Psoas muscle (tissue), 8 donors: ENCODE measurements at regions of chr2 and their contacts with region 1.

Region 1: GRCh38 chr2:64914735-64915509 is 74.3 kb upstream of the SLC1A4 start:
- DNase-seq: no peak
- ATAC-seq: no peak
- H3K4me3 ChIP-seq: no peak overlapping the region
- H3K27ac ChIP-seq: no peak overlapping the region
- H3K4me1 ChIP-seq: peaks cover 9% of the 10 kb centered on the region
- H3K27me3 ChIP-seq: no peaks in the 10 kb centered on the region
- CTCF ChIP-seq: no peak

Region 2: GRCh38 chr2:64988420-64989125 is 73.7 kb after region 1 on chr2:
- intact Hi-C with region 1: loop called (anchors 5 kb)
- DNase-seq: peak; percentile 72 to 78
- ATAC-seq: peak; percentile 69 to 79 (median 73)
- H3K4me3 ChIP-seq: peak overlapping the region; percentile 98
- H3K27ac ChIP-seq: peak overlapping the region; percentile 100
- H3K4me1 ChIP-seq: peaks cover 24% of the 10 kb centered on the region
- H3K27me3 ChIP-seq: no peaks in the 10 kb centered on the region
- CTCF ChIP-seq: peak; percentile 44

Region 3: DNA sequence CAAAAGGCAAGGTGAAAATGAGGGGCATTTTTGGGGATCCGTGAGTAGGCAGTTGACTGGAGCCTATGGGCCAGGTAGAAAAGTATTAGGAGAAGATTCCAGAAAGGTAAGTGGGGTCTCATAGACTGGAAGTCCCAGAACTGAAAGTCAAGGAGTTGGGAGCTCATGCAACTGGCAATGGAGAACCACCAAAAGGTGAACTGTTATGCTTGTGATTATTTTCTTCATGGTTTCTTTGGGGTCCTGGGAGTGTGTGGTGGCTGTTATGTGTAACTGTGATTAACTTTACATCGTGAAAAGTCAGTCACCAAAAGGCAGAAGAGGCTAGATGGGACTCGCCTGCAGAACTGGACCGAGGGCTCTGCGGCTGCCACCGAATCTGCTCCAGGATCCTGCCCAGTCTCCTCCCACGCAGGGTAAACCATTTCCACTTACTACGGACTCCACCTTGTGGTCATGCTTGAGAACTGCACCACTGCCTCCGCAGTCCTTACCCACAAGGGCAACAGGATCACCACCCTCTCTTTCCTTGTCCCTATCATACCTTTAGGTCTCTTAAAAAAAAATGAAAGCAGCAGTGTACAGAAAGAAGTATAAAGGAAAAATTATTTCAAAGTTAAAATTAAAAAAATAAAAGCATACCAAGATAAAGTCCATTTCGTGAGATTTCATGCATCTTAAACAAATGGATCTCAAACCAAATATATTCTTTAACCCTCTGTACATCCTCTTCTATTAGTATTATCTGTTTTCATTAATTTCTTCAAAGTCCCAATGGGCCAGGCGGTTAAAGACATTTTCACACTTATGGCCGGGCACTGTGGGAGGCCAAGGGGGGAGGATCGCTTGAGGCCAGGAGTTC is 125.7 kb after region 1 on chr2:
- intact Hi-C with region 1: loop called (anchors 1 to 2 kb)
- DNase-seq: peak; percentile 77 to 89
- ATAC-seq: peak; percentile 96 to 99 (median 98)
- H3K4me3 ChIP-seq: peak overlapping the region; percentile 43
- H3K27ac ChIP-seq: no peak overlapping the region
- H3K4me1 ChIP-seq: peaks cover 8% of the 10 kb centered on the region
- H3K27me3 ChIP-seq: no peaks in the 10 kb centered on the region
- CTCF ChIP-seq: peak; percentile 98

Region 4: DNA sequence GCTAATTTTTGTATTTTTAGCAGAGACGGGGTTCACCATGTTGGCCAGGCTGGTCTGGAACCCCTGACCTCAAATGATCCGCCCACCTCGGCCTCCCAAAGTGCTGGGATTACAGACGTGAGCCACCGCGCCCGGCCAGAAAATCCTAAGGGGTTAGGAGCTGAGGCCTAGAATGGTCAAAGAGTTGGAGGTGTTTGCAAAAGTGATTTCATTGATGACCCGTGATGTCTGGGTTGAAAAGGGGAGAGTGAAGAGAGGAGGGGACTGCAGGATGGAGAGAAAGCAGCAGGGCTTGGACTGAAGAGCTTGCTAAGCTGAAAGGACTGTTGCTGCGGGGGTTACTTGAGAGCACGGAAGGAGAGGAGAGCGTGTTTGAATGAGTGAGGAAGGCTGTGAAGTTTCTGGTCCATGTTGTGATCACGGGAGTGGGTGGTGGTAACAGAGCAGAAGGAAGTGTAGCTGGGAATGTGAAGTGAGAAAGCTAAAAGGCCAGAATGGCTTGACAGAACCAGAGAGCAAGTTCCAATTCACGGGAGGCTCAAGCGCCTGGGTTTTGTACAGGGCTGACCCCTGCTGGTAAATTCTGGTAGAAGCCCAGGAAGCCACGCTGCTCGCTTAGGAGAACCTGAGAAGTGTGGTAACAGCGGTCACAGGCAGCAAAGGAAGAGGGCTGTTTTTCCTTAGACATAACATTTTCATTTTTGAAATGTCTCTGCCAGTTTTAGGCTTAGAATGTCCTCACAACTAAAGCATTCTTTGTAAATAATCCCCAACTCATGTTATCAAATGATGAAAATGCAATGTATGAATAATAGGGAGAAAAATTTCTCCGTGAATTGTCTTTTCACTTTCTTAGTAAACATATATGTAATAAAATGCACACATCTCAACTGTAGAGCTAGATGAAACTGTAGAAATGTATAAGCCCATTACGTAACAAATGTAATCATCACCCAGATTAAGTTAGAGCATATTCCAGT is 272.2 kb after region 1 on chr2:
- intact Hi-C with region 1: loop called (anchors 2 to 5 kb)
- DNase-seq: peak; percentile 69 to 79
- ATAC-seq: peak; percentile 94 to 100 (median 97)
- H3K4me3 ChIP-seq: no peak overlapping the region
- H3K27ac ChIP-seq: no peak overlapping the region
- H3K4me1 ChIP-seq: no peaks in the 10 kb centered on the region
- H3K27me3 ChIP-seq: no peaks in the 10 kb centered on the region
- CTCF ChIP-seq: peak; percentile 82